T-cell (primary cell): ENCODE measurements at regions of chr5 and their contacts with region 1.

Region 1: GRCh38 chr5:32029261-32029660 is 144.9 kb downstream of the GOLPH3 start:
- DNase-seq: no peak
- ATAC-seq: no peak
- H3K4me3 ChIP-seq: no peak overlapping the region
- H3K4me3 Mint-ChIP-seq: no peak overlapping the region
- H3K27ac ChIP-seq: no peak overlapping the region
- H3K27ac Mint-ChIP-seq: no peak overlapping the region
- H3K4me1 ChIP-seq: peaks cover 5 to 9% of the 10 kb centered on the region in 2 experiments
- H3K4me1 Mint-ChIP-seq: peaks cover 16 to 18% (median 18%) of the 10 kb centered on the region in 3 donors
- H3K27me3 ChIP-seq: no peaks in the 10 kb centered on the region
- H3K27me3 Mint-ChIP-seq: no peaks in the 10 kb centered on the region

Region 2: GRCh38 chr5:31638748-31639418 is 390.4 kb before region 1 on chr5 and contains the start of gene PDZD2:
- CTCF ChIA-PET with region 1: interaction called in 1 of 2 experiments, 10 read pairs
- POLR2A ChIA-PET with region 1: no interaction called
- DNase-seq: peak; percentile 29 to 79 (median 52)
- ATAC-seq: peak; percentile 71 to 88 (median 81)
- H3K4me3 ChIP-seq: peak within 1 kb of the TSS; percentile 68 to 73
- H3K4me3 Mint-ChIP-seq: peak within 1 kb of the TSS in 2 of 3 donors; percentile 84 to 85
- H3K27ac ChIP-seq: peak within 1 kb of the TSS; percentile 14
- H3K27ac Mint-ChIP-seq: peak within 1 kb of the TSS in 1 of 2 donors; percentile 29
- H3K4me1 ChIP-seq: peaks cover 0 to 16% of the 10 kb centered on the region in 2 experiments
- H3K4me1 Mint-ChIP-seq: peaks cover 8 to 16% (median 15%) of the 10 kb centered on the region in 3 donors
- H3K27me3 ChIP-seq: peaks cover 0 to 23% of the 10 kb centered on the region in 2 experiments
- H3K27me3 Mint-ChIP-seq: peaks cover 11 to 20% of the 10 kb centered on the region in 2 donors
- total RNA-seq, gene PDZD2: 0.66 to 2.2 (median 1.2) TPM

Region 3: GRCh38 chr5:32044939-32045338 is 15.7 kb after region 1 on chr5:
- CTCF ChIA-PET with region 1: no interaction called
- POLR2A ChIA-PET with region 1: no interaction called
- DNase-seq: no peak
- ATAC-seq: no peak
- H3K4me3 ChIP-seq: no peak overlapping the region
- H3K4me3 Mint-ChIP-seq: no peak overlapping the region
- H3K27ac ChIP-seq: no peak overlapping the region
- H3K27ac Mint-ChIP-seq: no peak overlapping the region
- H3K4me1 ChIP-seq: no peaks in the 10 kb centered on the region
- H3K4me1 Mint-ChIP-seq: no peaks in the 10 kb centered on the region
- H3K27me3 ChIP-seq: no peaks in the 10 kb centered on the region
- H3K27me3 Mint-ChIP-seq: no peaks in the 10 kb centered on the region

Region 4: DNA sequence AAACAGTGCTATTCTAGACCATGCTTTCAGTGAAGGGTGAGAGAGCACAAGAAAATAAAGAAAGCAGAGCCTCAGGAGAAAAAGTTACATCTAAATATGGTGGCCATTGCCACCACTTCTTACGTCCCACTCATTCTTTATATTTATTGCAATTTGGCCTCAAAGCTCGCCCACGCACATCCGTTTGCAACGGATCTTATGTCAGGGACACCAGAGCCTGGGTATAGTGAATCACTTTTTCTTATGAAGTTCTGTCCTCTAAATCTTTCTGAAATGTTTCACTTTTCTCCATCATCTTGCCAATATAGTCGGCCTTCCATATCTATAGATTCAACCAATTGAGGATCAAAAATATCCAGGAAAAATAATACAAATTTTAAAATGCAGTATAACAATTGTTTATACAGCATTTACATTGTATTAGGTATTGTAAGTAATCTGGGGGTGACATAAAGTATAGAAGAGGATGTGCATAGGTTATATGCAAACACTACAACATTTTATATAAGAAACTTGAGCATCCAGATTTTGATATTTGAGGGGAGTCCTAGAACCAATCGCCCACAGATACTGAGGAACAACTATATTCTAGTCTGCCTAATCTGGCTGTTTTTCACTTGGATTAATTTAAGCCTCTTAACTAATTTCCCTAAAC is 109.7 kb after region 1 on chr5:
- CTCF ChIA-PET with region 1: no interaction called
- POLR2A ChIA-PET with region 1: no interaction called
- DNase-seq: peak in 6 of 35 experiments; percentile 4 to 18 (median 6)
- ATAC-seq: no peak
- H3K4me3 ChIP-seq: no peak overlapping the region
- H3K4me3 Mint-ChIP-seq: no peak overlapping the region
- H3K27ac ChIP-seq: no peak overlapping the region
- H3K27ac Mint-ChIP-seq: peak overlapping the region; percentile 1 to 36
- H3K4me1 ChIP-seq: no peaks in the 10 kb centered on the region
- H3K4me1 Mint-ChIP-seq: peaks cover 30 to 34% (median 31%) of the 10 kb centered on the region in 3 donors
- H3K27me3 ChIP-seq: no peaks in the 10 kb centered on the region
- H3K27me3 Mint-ChIP-seq: no peaks in the 10 kb centered on the region